HepG2 (cell line): ENCODE measurements at regions of chr3 and their contacts with region 1.

Region 1: GRCh38 chr3:197674741-197675562 is 61.8 kb downstream of the RUBCN start:
- DNase-seq: no peak
- ATAC-seq: no peak
- H3K4me3 ChIP-seq: no peak overlapping the region
- H3K27ac ChIP-seq: no peak overlapping the region
- H3K4me1 ChIP-seq: no peaks in the 10 kb centered on the region
- H3K27me3 ChIP-seq: no peaks in the 10 kb centered on the region
- CTCF ChIP-seq: no peak
- EP300 ChIP-seq: no peak
- POLR2A ChIP-seq: no peak
- RAD21 ChIP-seq: no peak

Region 2: DNA sequence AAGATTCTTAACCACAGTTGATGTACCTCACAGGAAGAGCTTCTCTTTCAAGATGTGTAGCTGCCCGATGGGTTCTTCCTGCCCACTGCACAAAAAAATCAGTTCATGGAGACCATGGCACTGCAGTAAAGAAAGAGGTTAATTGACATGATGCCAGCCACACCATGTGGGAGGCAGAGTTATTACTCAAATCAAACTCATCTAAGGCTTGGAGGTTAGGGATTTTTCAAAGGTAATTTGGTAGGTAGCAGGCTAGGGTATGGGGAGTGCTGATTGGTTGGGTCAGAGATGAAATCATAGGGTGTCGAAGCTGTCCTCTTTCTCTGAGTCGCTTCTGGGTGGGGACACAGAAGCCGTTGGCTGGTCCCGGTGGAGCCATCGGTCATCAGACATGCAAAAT is 61.8 kb before region 1 on chr3:
- CTCF ChIA-PET with region 1: no interaction called
- POLR2A ChIA-PET with region 1: no interaction called
- in situ Hi-C with region 1: loop called (anchors 10 kb)
- intact Hi-C with region 1: no loop called
- DNase-seq: no peak
- ATAC-seq: no peak
- H3K4me3 ChIP-seq: no peak overlapping the region
- H3K27ac ChIP-seq: no peak overlapping the region
- H3K4me1 ChIP-seq: no peaks in the 10 kb centered on the region
- H3K27me3 ChIP-seq: no peaks in the 10 kb centered on the region
- CTCF ChIP-seq: no peak
- EP300 ChIP-seq: no peak
- POLR2A ChIP-seq: no peak
- RAD21 ChIP-seq: no peak